Naive thymus-derived CD4-positive, alpha-beta T cell (primary cell): ENCODE measurements at regions of chr15 and their contacts with region 1.

Region 1: DNA sequence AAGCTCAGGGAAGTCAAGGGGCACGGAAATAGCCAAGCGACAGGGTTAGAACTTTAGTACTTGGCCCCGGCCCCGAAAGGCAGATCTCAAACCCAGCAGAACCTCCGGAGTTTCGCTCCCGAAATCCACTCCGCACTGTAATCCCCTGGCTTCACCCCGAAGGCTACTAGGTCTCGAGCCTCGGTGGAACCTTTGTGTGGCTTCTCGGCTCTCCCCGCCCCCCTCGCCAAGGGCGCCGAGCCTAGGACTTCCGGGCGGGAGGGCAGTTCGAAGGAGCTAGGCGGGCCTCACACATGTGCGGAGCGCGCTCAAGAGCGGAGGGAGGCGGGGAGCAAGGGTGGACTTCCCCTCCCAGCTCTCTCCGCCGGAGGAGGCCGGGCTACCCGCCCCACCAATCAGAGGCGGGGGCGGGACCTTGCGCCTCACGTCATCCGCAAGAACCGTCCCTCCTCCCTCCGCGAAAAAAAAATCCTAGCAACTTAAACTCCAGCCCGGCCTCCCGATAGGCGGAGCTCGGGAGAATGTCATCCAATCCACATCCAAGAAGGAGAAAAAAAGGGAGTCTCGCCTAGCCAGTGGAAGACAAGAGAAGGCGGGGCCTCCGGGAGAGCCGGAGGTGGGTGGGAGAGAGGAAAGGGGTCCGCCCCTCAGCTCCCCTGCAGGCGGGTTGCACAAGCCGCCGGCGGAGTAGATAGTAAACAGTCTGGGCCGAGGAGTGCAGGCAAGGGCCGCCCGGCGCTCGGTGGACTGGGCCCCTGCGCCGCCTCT is 2.4 kb upstream of the SIN3A start:
- DNase-seq: peak; percentile 86 to 100 (median 99)
- ATAC-seq: peak; percentile 54
- H3K4me3 ChIP-seq: peak overlapping the region; percentile 89
- H3K4me3 Mint-ChIP-seq: peak overlapping the region; percentile 91 to 99 (median 96)
- H3K27ac ChIP-seq: peak overlapping the region; percentile 97
- H3K27ac Mint-ChIP-seq: peak overlapping the region; percentile 94 to 99 (median 98)
- H3K4me1 ChIP-seq: peaks cover 17 to 29% of the 10 kb centered on the region in 2 donors
- H3K4me1 Mint-ChIP-seq: peaks cover 19 to 40% (median 30%) of the 10 kb centered on the region in 7 donors
- H3K27me3 ChIP-seq: no peaks in the 10 kb centered on the region
- H3K27me3 Mint-ChIP-seq: peaks cover 0 to 2% (median 0%) of the 10 kb centered on the region in 5 donors

Region 2: DNA sequence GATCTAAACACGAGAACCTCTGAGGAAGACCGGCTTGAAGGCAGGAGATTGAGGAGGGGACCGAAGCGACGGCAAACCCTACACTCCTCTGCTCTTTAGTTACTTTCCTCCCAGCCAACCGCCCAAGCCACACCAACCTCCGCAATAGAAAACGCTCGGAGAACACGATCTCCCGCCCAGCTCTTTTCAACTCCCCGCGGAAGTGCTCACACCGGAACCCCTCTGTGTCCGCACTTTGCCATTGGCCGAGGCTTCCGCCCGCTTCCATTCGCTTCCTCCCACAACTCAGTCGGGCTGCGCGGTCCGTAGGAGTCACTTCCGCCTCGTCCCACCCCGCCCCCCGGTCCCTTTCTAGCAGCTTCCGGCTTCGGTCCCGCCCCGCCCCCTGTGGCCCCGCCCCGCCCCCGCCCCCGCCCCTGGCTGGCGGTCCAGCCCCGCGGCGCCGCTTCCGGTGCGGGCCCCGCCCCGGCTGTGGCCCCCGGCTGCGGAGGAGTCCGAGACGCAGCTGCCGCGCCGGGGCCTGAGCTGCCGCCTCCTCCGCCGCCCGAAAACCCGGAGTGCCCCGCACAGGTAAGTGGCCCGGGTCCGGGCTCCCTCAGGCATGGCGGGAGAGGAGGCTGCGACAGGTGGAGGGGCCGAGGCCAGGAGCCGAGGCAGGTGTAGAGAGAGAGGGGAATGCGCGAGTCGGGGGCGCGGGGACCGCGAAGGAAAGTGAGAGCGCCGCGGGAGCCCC is 913.0 kb before region 1 on chr15 and contains the start of gene ARID3B:
- CTCF ChIA-PET with region 1: no interaction called
- POLR2A ChIA-PET with region 1: interaction called, 5 read pairs
- intact Hi-C with region 1: loop called in 1 of 2 experiments (anchors 2 kb)
- DNase-seq: peak; percentile 72 to 95 (median 90)
- ATAC-seq: peak; percentile 94
- H3K4me3 ChIP-seq: peak within 1 kb of the TSS; percentile 98
- H3K4me3 Mint-ChIP-seq: peak within 1 kb of the TSS; percentile 90 to 99 (median 98)
- H3K27ac ChIP-seq: peak within 1 kb of the TSS; percentile 87
- H3K27ac Mint-ChIP-seq: peak within 1 kb of the TSS; percentile 84 to 99 (median 94)
- H3K4me1 ChIP-seq: peaks cover 18 to 34% of the 10 kb centered on the region in 2 donors
- H3K4me1 Mint-ChIP-seq: peaks cover 46 to 64% (median 55%) of the 10 kb centered on the region in 7 donors
- H3K27me3 ChIP-seq: no peaks in the 10 kb centered on the region
- H3K27me3 Mint-ChIP-seq: no peaks in the 10 kb centered on the region
- total RNA-seq, gene ARID3B: 29.5 to 45.4 (median 36.8) TPM

Region 3: GRCh38 chr15:74873036-74873755 is 580.7 kb before region 1 on chr15 and contains the start of gene SCAMP2:
- CTCF ChIA-PET with region 1: no interaction called
- POLR2A ChIA-PET with region 1: no interaction called
- intact Hi-C with region 1: loop called (anchors 5 to 10 kb)
- DNase-seq: peak; percentile 83 to 94 (median 91)
- ATAC-seq: peak; percentile 95
- H3K4me3 ChIP-seq: peak within 1 kb of the TSS; percentile 86
- H3K4me3 Mint-ChIP-seq: peak within 1 kb of the TSS; percentile 92 to 100 (median 98)
- H3K27ac ChIP-seq: peak within 1 kb of the TSS; percentile 98
- H3K27ac Mint-ChIP-seq: peak within 1 kb of the TSS; percentile 88 to 99 (median 96)
- H3K4me1 ChIP-seq: peaks cover 38 to 39% of the 10 kb centered on the region in 2 donors
- H3K4me1 Mint-ChIP-seq: peaks cover 31 to 54% (median 45%) of the 10 kb centered on the region in 7 donors
- H3K27me3 ChIP-seq: no peaks in the 10 kb centered on the region
- H3K27me3 Mint-ChIP-seq: peaks cover 0 to 8% (median 0%) of the 10 kb centered on the region in 5 donors
- total RNA-seq, gene SCAMP2: 78.9 to 130 (median 116) TPM

Region 4: DNA sequence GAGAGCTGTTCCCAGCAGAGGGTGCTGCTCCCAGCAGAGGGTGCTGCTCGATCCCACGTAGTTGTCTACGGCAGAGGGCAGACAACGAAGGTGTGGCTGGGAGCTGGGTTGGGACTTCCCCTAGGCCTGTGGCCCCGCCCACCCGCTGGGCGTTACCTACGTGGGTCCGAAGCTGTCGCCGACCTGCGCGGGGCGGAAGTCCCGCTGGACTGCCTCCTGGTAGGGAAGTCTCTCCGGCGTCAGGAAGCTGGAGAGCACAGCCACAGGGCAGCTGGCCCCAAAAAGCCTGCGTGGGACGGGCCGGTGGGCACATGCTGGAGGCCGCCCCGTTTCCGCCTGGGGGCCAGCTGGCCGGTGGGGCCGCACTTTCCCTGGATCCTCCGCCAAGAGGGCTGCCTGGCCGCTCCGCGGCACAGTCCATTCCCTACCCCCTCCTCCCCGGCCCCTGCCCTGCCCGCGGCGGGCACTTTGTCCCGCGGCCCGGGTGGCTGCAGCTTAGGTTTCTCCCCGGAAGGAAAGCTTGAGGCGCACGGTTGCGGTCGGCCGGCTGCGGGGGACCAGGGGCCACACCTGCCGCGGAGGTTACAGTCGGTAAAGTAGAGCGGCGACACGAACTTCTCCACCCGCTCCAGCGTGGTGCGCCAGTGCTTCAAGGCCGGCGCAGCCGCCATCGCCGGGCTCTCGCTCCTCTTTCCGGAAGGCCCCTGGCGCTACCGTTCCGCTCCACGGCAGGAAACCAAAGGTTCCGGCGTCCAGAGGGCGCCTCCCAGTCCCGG is 85.8 kb before region 1 on chr15 and contains the start of gene MAN2C1:
- CTCF ChIA-PET with region 1: interaction called, 30 read pairs
- POLR2A ChIA-PET with region 1: interaction called, 133 read pairs
- intact Hi-C with region 1: loop called (anchors 1 kb)
- DNase-seq: peak; percentile 80 to 96 (median 87)
- ATAC-seq: peak; percentile 98
- H3K4me3 ChIP-seq: peak within 1 kb of the TSS; percentile 75
- H3K4me3 Mint-ChIP-seq: peak within 1 kb of the TSS; percentile 88 to 94 (median 92)
- H3K27ac ChIP-seq: peak within 1 kb of the TSS; percentile 93
- H3K27ac Mint-ChIP-seq: peak within 1 kb of the TSS; percentile 90 to 97 (median 94)
- H3K4me1 ChIP-seq: peaks cover 11 to 15% of the 10 kb centered on the region in 2 donors
- H3K4me1 Mint-ChIP-seq: peaks cover 8 to 28% (median 24%) of the 10 kb centered on the region in 7 donors
- H3K27me3 ChIP-seq: no peaks in the 10 kb centered on the region
- H3K27me3 Mint-ChIP-seq: no peaks in the 10 kb centered on the region
- total RNA-seq, gene MAN2C1: 298 to 557 (median 451) TPM

Region 5: GRCh38 chr15:75542386-75542797 is 88.5 kb after region 1 on chr15:
- CTCF ChIA-PET with region 1: no interaction called
- POLR2A ChIA-PET with region 1: no interaction called
- intact Hi-C with region 1: no loop called
- DNase-seq: no peak
- ATAC-seq: no peak
- H3K4me3 ChIP-seq: no peak overlapping the region
- H3K4me3 Mint-ChIP-seq: no peak overlapping the region
- H3K27ac ChIP-seq: no peak overlapping the region
- H3K27ac Mint-ChIP-seq: peak overlapping the region in 1 of 9 donors; percentile 9
- H3K4me1 ChIP-seq: no peaks in the 10 kb centered on the region
- H3K4me1 Mint-ChIP-seq: peaks cover 22 to 30% (median 26%) of the 10 kb centered on the region in 7 donors
- H3K27me3 ChIP-seq: no peaks in the 10 kb centered on the region
- H3K27me3 Mint-ChIP-seq: no peaks in the 10 kb centered on the region

Region 6: DNA sequence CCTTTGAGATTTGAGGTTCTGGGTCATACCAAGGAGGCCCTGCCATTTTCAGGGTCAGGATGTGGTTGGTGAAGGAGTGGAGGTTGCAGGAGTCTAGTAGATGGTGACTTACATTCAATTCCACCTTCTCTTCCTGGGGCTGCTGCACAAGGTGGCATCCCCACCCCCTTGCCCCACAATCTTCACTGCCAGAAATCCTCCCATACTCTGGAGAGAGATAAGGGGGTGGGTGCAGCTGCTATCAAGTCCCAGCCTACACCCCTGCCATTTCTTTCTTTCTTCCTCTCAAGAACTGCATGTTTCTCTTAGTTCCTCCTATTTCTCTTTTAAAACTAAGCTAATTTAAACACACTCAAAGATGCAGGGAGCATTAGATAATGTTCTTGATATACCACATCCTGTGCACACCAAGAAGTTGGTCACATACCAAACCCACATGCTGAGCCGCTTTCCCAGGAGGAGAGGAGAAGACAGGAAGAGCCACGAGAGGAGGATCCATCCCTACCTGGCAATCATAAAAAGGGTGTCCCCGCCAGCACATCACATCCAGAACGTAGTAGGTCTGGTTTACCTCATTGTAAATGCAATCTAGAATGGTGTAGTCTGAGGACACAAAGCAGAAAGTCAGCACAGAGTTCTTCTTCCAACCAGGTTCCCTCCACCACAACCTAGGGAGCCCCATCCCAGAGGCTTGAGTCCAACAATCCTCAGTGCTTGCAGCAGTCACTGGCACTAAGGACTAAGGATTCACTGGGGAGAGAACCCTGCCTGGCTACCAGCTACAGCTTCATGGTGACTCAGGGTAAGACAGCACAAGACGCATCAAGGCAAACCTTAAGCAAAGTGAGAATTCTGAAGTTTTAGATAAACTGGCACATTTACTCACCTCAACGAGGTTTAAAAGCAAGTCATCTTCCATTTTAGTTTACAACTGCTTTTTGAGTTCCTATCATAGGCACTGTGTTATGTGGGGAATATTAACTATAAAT is 153.1 kb after region 1 on chr15:
- CTCF ChIA-PET with region 1: no interaction called
- POLR2A ChIA-PET with region 1: interaction called, 10 read pairs
- intact Hi-C with region 1: no loop called
- DNase-seq: peak in 7 of 9 donors; percentile 18 to 55 (median 50)
- ATAC-seq: peak; percentile 76
- H3K4me3 ChIP-seq: peak overlapping the region; percentile 17
- H3K4me3 Mint-ChIP-seq: peak overlapping the region; percentile 65 to 82 (median 73)
- H3K27ac ChIP-seq: peak overlapping the region; percentile 59
- H3K27ac Mint-ChIP-seq: peak overlapping the region; percentile 48 to 92 (median 84)
- H3K4me1 ChIP-seq: peaks cover 41 to 42% of the 10 kb centered on the region in 2 donors
- H3K4me1 Mint-ChIP-seq: peaks cover 40 to 52% (median 43%) of the 10 kb centered on the region in 7 donors
- H3K27me3 ChIP-seq: no peaks in the 10 kb centered on the region
- H3K27me3 Mint-ChIP-seq: no peaks in the 10 kb centered on the region

Region 7: GRCh38 chr15:75842722-75843551 is 389.1 kb after region 1 on chr15 and contains the start of gene UBE2Q2:
- CTCF ChIA-PET with region 1: no interaction called
- POLR2A ChIA-PET with region 1: no interaction called
- intact Hi-C with region 1: loop called in 1 of 2 experiments (anchors 2 kb)
- DNase-seq: peak; percentile 45 to 78 (median 67)
- ATAC-seq: peak; percentile 75
- H3K4me3 ChIP-seq: peak within 1 kb of the TSS; percentile 68
- H3K4me3 Mint-ChIP-seq: peak within 1 kb of the TSS; percentile 85 to 99 (median 96)
- H3K27ac ChIP-seq: peak within 1 kb of the TSS; percentile 76
- H3K27ac Mint-ChIP-seq: peak within 1 kb of the TSS; percentile 85 to 97 (median 92)
- H3K4me1 ChIP-seq: peaks cover 20 to 30% of the 10 kb centered on the region in 2 donors
- H3K4me1 Mint-ChIP-seq: peaks cover 37 to 50% (median 45%) of the 10 kb centered on the region in 7 donors
- H3K27me3 ChIP-seq: no peaks in the 10 kb centered on the region
- H3K27me3 Mint-ChIP-seq: peaks cover 0 to 20% (median 0%) of the 10 kb centered on the region in 5 donors
- total RNA-seq, gene UBE2Q2: 28.2 to 32.1 (median 28.8) TPM